OCI-LY7 (cell line): ENCODE measurements at regions of chr5 and their contacts with region 1.

Region 1: GRCh38 chr5:14818931-14819790 is 52.4 kb downstream of the ANKH start:
- DNase-seq: no peak
- H3K4me3 ChIP-seq: no peak overlapping the region
- H3K27ac ChIP-seq: no peak overlapping the region
- H3K4me1 ChIP-seq: peaks cover 9% of the 10 kb centered on the region
- CTCF ChIP-seq: no peak

Region 2: DNA sequence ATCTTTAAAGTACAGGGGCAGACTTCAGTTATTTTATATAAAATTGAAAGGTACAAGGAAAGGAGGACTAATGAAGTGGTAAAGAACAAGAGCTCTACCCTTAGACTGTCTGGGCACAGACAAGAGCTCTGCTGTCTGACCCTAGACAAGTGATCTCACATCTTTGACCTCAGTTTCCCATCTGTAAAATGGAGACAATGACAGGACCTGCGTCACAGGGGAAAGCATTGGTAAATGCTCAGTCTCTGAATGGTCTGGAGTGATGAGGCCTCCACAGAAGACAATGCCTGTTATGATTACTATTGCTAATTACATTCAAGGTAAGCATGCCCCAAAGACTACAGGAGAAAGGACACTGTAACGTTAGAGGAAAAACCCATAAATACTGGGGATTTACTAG is 14.9 kb after region 1 on chr5:
- CTCF ChIA-PET with region 1: no interaction called
- POLR2A ChIA-PET with region 1: interaction called, 12 read pairs
- intact Hi-C with region 1: no loop called
- DNase-seq: no peak
- H3K4me3 ChIP-seq: no peak overlapping the region
- H3K27ac ChIP-seq: no peak overlapping the region
- H3K4me1 ChIP-seq: peaks cover 5% of the 10 kb centered on the region
- CTCF ChIP-seq: no peak